ENCODE measurements at regions of chr12 and their contacts with region 1.

Region 1: DNA sequence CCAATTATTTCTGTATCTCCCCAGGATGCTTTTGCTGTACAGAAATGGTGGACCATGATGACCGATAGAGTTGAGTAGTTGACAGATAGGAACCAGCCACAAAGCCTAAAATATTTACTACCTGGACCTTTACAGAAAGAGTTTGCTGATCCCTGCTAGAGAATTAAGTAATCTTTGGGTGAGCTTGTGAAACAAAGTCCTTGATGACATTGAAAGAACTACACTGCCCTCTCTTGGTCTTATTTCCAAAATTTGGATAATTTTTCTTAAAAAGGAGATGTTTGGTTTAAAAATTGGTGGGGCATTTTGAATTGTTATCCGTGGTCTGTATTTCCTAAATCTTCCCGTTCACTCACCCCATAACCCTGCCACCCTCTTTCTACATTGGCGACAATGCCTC is 13.7 kb upstream of the TCTN1 start:
- DNase-seq: no peak
- H3K4me3 ChIP-seq: no peak overlapping the region
- H3K27ac ChIP-seq: no peak overlapping the region
- H3K4me1 ChIP-seq: no peaks in the 10 kb centered on the region
- H3K27me3 ChIP-seq: no peaks in the 10 kb centered on the region
- CTCF ChIP-seq: peak; percentile 34

Region 2: DNA sequence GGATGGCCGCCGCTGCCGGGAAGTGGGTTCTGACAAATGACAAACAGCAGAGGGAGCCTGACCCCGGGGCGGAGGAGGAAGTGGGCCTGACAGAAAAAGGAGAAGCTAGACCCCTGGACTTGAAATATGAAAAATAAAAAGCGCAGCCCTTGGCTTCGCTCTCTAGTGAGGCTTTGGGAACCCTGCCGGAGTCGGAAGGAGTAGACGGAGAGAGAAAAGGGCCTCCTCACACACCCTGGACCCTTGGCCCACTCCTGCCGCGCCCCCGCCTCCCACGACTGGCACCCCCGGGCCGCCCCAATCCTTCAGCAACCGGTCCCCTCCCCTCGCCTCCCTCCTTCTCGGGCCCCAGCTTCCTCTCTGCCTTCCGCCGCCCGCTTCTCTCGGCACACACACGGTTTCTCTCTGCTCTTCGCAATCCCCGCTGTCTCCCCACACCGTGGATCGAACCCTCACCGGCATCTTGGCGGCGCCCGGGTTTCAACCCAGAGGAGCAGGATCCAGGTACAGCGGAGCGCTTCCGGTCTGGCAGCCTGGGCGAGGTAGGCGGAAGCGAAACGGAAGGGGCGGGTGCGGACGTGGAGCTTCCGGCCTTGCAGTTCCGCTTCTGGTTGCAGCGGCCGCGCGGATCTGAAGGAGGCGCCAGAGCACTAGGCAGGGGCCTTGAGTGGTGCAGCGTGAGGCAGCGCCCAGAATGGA is 150.3 kb before region 1 on chr12 and contains the start of gene ARPC3:
- intact Hi-C with region 1: loop called (anchors 5 kb)
- DNase-seq: peak; percentile 97
- H3K4me3 ChIP-seq: peak within 1 kb of the TSS; percentile 68
- H3K27ac ChIP-seq: peak within 1 kb of the TSS; percentile 89
- H3K4me1 ChIP-seq: peaks cover 3% of the 10 kb centered on the region
- H3K27me3 ChIP-seq: no peaks in the 10 kb centered on the region
- CTCF ChIP-seq: peak; percentile 72
- total RNA-seq, gene ARPC3: 252 to 321 TPM

Region 3: GRCh38 chr12:110468212-110469048 is 131.8 kb before region 1 on chr12 and contains the starts of genes FAM216A and GPN3:
- intact Hi-C with region 1: loop called (anchors 5 kb)
- DNase-seq: peak; percentile 99
- H3K4me3 ChIP-seq: peak within 1 kb of the TSS; percentile 68
- H3K27ac ChIP-seq: peak within 1 kb of the TSS; percentile 84
- H3K4me1 ChIP-seq: peaks cover 7% of the 10 kb centered on the region
- H3K27me3 ChIP-seq: no peaks in the 10 kb centered on the region
- CTCF ChIP-seq: no peak
- total RNA-seq, gene FAM216A: 1.6 TPM
- total RNA-seq, gene GPN3: 10.9 to 21.8 TPM

Region 4: GRCh38 chr12:110508071-110508586 is 92.1 kb before region 1 on chr12:
- intact Hi-C with region 1: loop called (anchors 2 kb)
- DNase-seq: no peak
- H3K4me3 ChIP-seq: no peak overlapping the region
- H3K27ac ChIP-seq: no peak overlapping the region
- H3K4me1 ChIP-seq: no peaks in the 10 kb centered on the region
- H3K27me3 ChIP-seq: no peaks in the 10 kb centered on the region
- CTCF ChIP-seq: no peak

Region 5: GRCh38 chr12:110555577-110556406 is 44.5 kb before region 1 on chr12:
- intact Hi-C with region 1: loop called (anchors 2 kb)
- DNase-seq: no peak
- H3K4me3 ChIP-seq: no peak overlapping the region
- H3K27ac ChIP-seq: no peak overlapping the region
- H3K4me1 ChIP-seq: peaks cover 4% of the 10 kb centered on the region
- H3K27me3 ChIP-seq: no peaks in the 10 kb centered on the region
- CTCF ChIP-seq: no peak